Mammary epithelial cell (primary cell): ENCODE measurements at regions of chr19 and their contacts with region 1.

Region 1: GRCh38 chr19:3403489-3404323 is 37.3 kb downstream of the NFIC start:
- DNase-seq: peak; percentile 11
- H3K4me3 ChIP-seq: peak overlapping the region in 1 of 3 experiments; percentile 2
- H3K27ac ChIP-seq: peak overlapping the region; percentile 12
- H3K4me1 ChIP-seq: peaks cover 20% of the 10 kb centered on the region
- H3K27me3 ChIP-seq: no peaks in the 10 kb centered on the region
- CTCF ChIP-seq: no peak

Region 2: DNA sequence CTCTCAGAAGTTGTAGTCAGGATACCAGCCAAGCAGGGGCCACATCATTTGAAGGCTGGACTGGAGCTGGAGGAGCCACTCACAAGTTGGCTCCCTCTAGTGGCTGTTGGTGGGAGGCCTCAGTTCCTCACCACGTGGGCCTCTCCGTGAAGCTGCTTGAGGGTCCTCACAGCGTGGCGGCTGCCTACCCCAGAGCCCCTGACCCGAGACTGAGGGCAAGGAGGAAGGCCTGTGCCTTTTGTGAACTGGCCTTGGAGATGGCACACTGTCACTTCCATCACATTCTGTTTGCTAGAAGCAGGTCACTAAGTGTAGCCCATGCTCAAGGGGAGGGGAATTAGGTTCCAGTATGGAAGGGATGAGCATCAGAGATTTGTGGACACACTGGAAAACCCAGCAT is 294.9 kb before region 1 on chr19:
- CTCF ChIA-PET with region 1: no interaction called
- dilution Hi-C with region 1: no loop called
- in situ Hi-C with region 1: no loop called
- intact Hi-C with region 1: no loop called
- DNase-seq: peak; percentile 36
- H3K4me3 ChIP-seq: no peak overlapping the region
- H3K27ac ChIP-seq: no peak overlapping the region
- H3K4me1 ChIP-seq: no peaks in the 10 kb centered on the region
- H3K27me3 ChIP-seq: no peaks in the 10 kb centered on the region
- CTCF ChIP-seq: peak; percentile 73 to 83

Region 3: GRCh38 chr19:3234800-3235199 is 168.9 kb before region 1 on chr19:
- CTCF ChIA-PET with region 1: no interaction called
- dilution Hi-C with region 1: loop called (anchors 10 kb)
- in situ Hi-C with region 1: no loop called
- intact Hi-C with region 1: no loop called
- DNase-seq: no peak
- H3K4me3 ChIP-seq: no peak overlapping the region
- H3K27ac ChIP-seq: no peak overlapping the region
- H3K4me1 ChIP-seq: no peaks in the 10 kb centered on the region
- H3K27me3 ChIP-seq: no peaks in the 10 kb centered on the region
- CTCF ChIP-seq: peak; percentile 28 to 36

Region 4: GRCh38 chr19:3365836-3366752 is 37.6 kb before region 1 on chr19 and contains the start of gene NFIC:
- CTCF ChIA-PET with region 1: no interaction called
- dilution Hi-C with region 1: loop called (anchors 5 kb)
- in situ Hi-C with region 1: no loop called
- intact Hi-C with region 1: loop called (anchors 5 kb)
- DNase-seq: peak; percentile 69
- H3K4me3 ChIP-seq: peak within 1 kb of the TSS; percentile 84 to 87 (median 84)
- H3K27ac ChIP-seq: peak within 1 kb of the TSS; percentile 51
- H3K4me1 ChIP-seq: peaks cover 41% of the 10 kb centered on the region
- H3K27me3 ChIP-seq: no peaks in the 10 kb centered on the region
- CTCF ChIP-seq: no peak
- total RNA-seq, gene NFIC: 43.7 to 77.5 TPM

Region 5: DNA sequence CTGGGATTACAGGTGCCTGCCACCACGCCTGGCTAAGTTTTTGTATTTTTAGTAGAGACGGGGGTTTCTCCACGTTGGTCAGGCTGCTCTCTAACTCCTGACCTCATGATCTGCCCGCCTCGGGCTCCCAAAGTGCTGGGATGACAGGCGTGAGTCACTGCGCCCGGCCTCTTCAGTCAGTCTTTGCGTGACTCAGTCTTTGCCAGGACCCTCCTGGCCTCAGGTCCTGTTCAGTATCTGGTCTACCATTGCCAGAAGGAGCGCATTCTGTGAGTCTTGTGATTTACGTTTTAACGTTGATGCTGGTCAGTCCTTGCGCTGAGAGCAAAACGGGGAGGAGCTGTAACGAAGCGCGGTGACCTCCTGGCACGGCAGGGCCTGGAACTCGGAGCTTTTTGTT is 161.4 kb after region 1 on chr19:
- CTCF ChIA-PET with region 1: no interaction called
- dilution Hi-C with region 1: loop called (anchors 10 kb)
- in situ Hi-C with region 1: no loop called
- intact Hi-C with region 1: no loop called
- DNase-seq: no peak
- H3K4me3 ChIP-seq: no peak overlapping the region
- H3K27ac ChIP-seq: no peak overlapping the region
- H3K4me1 ChIP-seq: peaks cover 13% of the 10 kb centered on the region
- H3K27me3 ChIP-seq: no peaks in the 10 kb centered on the region
- CTCF ChIP-seq: no peak